AG04449 (cell line): ENCODE measurements at regions of chr1 and their contacts with region 1.

Region 1: GRCh38 chr1:26417111-26417759 is 6.6 kb downstream of the LIN28A start:
- DNase-seq: no peak
- H3K4me3 ChIP-seq: no peak overlapping the region
- CTCF ChIP-seq: peak; percentile 97

Region 2: DNA sequence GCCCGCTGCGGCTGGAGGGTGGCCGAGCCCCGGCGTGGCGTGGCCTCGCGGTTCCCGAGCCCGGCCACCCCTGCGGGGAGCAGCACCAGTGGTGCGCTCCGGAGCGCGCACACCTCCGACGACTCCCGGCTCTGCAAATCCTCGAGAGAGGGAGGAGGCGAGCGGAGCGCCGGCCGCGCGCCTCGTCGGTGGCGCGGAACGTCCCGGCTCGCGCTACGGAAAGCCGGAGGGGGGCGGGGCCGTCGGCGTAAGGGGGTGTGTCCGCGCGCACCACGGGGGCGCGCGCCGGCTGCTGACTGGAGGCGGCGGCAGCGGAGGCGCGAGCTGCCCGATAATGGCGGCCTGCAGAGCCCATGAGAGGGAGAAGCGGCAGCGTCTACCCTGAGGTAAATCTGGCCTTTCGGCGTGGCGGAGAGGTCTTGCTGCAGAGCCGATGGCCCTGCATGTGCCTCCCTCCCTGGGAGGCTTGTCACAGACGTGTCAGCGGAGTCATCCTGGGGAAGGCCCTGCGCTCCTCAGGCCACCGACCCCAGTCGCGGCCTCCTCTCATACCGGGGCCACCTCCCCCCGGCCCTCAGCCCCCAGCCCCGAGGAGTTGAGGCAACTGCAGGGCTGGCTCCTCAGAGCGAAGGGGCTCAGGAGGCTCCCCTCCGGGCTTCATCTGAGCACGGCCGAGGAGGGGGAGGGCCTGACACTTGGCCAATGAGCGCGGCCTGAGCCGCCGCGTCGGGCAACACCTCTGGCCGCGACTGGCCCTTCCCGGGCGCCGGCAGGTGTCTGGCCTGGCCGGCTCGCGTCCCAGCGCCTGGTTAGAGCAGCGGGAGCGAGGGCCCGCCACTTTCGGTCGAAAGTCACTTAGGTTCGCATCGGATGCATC is 305.5 kb before region 1 on chr1 and contains the start of gene PDIK1L:
- CTCF ChIA-PET with region 1: interaction called, 11 read pairs
- POLR2A ChIA-PET with region 1: no interaction called
- DNase-seq: peak; percentile 59
- H3K4me3 ChIP-seq: peak within 1 kb of the TSS; percentile 97
- CTCF ChIP-seq: no peak

Region 3: DNA sequence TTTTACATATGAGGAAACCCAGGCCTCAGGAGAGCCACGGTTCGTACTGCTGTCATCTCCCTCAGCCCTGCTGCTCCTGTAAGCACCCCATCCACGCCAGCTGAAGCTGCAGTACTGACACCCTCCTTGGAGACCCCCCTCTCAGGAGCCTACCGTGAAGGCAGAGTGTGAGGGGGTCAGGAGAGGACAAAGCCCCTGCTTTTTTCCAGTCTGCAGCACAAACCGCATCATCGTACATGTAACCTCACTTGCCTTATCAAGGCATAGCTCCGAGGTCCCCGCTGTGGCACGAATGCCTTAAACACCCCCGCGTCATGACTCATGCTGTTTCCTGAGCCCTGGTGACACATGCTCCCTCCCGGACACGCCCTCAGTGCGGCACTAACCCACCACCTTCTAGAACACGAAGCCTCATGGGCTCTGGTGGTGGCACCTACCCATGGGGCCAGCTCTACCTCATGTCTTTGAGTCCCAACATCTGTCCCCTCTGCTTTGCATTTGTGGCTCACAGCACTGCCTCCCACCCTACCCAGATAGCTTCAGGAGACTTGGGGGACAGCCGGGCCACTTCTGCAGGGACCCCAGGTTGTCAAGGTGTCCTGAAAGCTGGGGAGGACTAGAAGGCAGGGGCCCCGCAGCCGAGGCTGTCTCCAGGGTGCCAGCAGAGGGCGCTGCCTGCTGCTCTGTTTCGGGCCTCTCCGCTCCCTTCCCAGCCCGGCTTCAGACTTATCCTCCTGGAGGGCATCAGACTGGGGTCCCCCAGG is 132.5 kb before region 1 on chr1:
- CTCF ChIA-PET with region 1: interaction called, 34 read pairs
- POLR2A ChIA-PET with region 1: no interaction called
- DNase-seq: peak; percentile 69
- H3K4me3 ChIP-seq: no peak overlapping the region; the same call in 1 of the 2 replicates
- CTCF ChIP-seq: peak; percentile 85

Region 4: DNA sequence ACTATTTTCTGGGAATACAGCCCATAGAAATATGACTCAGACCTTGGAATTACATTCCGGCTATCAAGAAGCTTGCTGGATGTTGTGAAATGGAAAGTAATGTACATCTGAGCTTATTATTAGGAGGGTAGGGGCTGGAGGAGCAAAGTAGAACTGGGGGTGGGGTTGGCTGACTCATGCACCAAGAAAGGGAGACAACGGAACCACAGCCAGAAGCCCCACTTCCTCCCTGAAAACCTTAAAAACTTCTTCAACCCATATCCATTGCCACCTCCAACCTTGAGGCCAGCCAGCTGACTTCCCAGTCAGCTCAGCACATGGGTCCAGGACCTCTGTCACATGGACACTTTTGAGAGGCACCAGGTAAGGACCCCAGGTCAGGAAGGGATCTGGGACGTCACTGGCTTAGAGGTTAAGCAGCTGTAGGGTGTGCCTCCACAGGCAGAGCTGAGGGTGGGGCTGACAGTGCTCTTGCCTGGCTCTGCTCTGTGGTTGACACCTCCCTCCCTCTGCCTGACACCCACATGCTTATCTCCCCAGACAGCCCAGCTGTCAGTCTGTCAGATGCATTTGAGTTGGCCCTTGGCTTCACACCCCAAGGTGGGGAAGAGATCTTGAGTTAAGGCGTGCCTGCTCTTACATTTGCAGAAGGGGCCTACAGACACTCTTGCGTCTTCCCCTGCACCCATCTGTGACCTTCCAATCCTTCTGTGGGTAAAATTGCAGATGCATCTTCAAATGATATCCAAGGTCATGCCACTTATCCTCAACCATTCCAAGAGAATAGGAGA is 39.0 kb before region 1 on chr1:
- CTCF ChIA-PET with region 1: interaction called, 21 read pairs
- POLR2A ChIA-PET with region 1: interaction called, 3 read pairs
- DNase-seq: peak; percentile 92
- H3K4me3 ChIP-seq: peak overlapping the region; percentile 34
- CTCF ChIP-seq: no peak

Region 5: GRCh38 chr1:26431979-26432695 is 14.9 kb after region 1 on chr1 and contains the start of gene DHDDS:
- CTCF ChIA-PET with region 1: interaction called, 91 read pairs
- POLR2A ChIA-PET with region 1: interaction called, 3 read pairs
- DNase-seq: peak; percentile 82
- H3K4me3 ChIP-seq: peak within 1 kb of the TSS; percentile 86
- CTCF ChIP-seq: no peak

Region 6: DNA sequence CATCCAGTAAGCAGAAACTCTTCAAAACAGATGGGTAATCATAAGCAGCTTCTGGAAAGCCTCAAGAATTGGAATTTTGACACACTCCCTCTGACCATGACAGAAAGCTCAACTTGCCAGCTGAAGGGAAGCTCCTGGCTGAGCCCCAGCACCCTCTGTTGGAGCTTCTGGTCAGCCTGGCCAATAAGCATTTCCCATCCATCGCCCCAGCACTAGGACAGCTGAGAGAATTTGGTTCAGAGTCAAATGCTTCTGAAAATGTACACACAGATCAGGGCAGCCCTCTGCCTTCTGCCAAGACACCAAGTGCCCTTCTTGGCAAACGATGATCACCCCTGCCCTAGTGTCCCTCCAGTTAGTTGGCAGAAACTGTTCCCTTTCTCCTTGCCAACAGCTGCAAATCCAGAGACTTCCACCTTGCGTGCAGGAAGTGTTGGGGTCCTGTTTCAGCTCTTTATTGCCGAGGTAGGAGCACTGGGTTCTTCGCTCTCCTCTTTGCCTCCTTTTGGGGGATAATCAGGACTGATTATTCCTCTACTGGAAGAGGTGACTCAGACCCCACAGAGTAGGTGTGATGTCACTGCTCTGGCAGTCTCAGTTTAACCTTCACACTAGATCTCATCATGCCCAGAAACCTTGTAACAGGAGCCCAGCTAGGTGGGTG is 382.4 kb after region 1 on chr1:
- CTCF ChIA-PET with region 1: no interaction called
- POLR2A ChIA-PET with region 1: no interaction called
- DNase-seq: no peak
- H3K4me3 ChIP-seq: peak overlapping the region; percentile 24; the same call in 1 of the 2 replicates
- CTCF ChIP-seq: peak; percentile 9